ENCODE measurements at regions of chr5 and their contacts with region 1.

Region 1: GRCh38 chr5:93735378-93735777 is 6.0 kb downstream of the POU5F2 start:
- DNase-seq: no peak
- H3K4me3 ChIP-seq: no peak overlapping the region
- H3K27ac ChIP-seq: no peak overlapping the region
- H3K4me1 ChIP-seq: no peaks in the 10 kb centered on the region
- H3K27me3 ChIP-seq: no peaks in the 10 kb centered on the region
- CTCF ChIP-seq: no peak
- POLR2A ChIP-seq: no peak

Region 2: GRCh38 chr5:94045839-94046782 is 310.7 kb after region 1 on chr5:
- intact Hi-C with region 1: loop called (anchors 5 kb)
- DNase-seq: no peak
- H3K4me3 ChIP-seq: no peak overlapping the region
- H3K27ac ChIP-seq: no peak overlapping the region
- H3K4me1 ChIP-seq: no peaks in the 10 kb centered on the region
- H3K27me3 ChIP-seq: no peaks in the 10 kb centered on the region
- CTCF ChIP-seq: no peak
- POLR2A ChIP-seq: no peak

Region 3: DNA sequence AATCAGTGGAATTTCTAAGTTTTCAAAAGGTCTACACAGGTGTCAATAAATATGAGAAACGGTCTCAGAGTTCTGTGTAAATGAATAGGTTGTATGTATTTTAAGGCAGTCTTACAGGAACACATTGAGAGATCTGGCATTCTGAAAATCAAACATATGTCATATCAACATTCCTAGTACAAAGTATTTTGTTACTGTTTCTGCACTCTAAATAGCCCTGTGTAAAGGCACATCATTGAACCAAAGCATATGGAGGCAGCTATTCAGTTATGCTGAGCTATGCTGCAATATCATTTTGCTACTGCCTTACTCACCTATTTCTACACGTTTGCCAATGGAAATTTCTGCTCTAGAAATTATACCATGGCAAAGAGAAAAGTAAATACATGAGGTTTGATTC is 503.9 kb after region 1 on chr5:
- intact Hi-C with region 1: loop called (anchors 10 kb)
- DNase-seq: no peak
- H3K4me3 ChIP-seq: no peak overlapping the region
- H3K27ac ChIP-seq: no peak overlapping the region
- H3K4me1 ChIP-seq: no peaks in the 10 kb centered on the region
- H3K27me3 ChIP-seq: no peaks in the 10 kb centered on the region
- CTCF ChIP-seq: no peak
- POLR2A ChIP-seq: no peak

Measured in breast epithelium (tissue), 4 donors.